A673 (cell line): ENCODE measurements at regions of chr12 and their contacts with region 1.

Region 1: GRCh38 chr12:47837190-47838171 is 17.8 kb upstream of the HDAC7 start:
- DNase-seq: peak; percentile 74
- H3K4me3 ChIP-seq: no peak overlapping the region
- H3K27ac ChIP-seq: no peak overlapping the region
- H3K4me1 ChIP-seq: no peaks in the 10 kb centered on the region
- H3K27me3 ChIP-seq: no peaks in the 10 kb centered on the region
- CTCF ChIP-seq: peak; percentile 95

Region 2: DNA sequence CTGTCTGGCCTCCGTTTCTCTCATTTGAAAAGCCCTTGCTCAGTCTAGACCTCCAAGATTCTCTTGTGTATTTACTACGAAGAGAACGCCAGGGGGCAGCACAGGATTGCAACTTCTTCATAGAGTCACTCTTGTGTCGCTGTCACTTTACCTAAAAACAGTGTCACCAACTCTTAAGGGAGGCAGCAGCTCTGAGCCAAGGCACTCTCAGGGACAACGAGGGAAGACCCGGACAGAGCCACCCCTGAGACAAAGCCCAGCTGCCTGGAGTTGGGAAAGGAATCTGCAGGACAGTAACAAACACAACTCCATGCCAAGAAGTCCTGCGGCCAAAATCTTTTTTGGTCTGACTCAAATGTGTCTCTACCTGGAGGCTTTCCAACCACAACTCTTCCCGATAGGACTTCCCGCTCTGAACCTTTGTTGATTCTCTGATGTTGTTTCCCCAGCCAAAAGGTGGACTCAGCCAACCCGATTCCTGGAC is 122.0 kb before region 1 on chr12:
- CTCF ChIA-PET with region 1: interaction called, 13 read pairs
- POLR2A ChIA-PET with region 1: no interaction called
- intact Hi-C with region 1: loop called (anchors 1 kb)
- DNase-seq: peak; percentile 89
- H3K4me3 ChIP-seq: no peak overlapping the region
- H3K27ac ChIP-seq: no peak overlapping the region
- H3K4me1 ChIP-seq: peaks cover 11% of the 10 kb centered on the region
- H3K27me3 ChIP-seq: no peaks in the 10 kb centered on the region
- CTCF ChIP-seq: peak; percentile 81

Region 3: GRCh38 chr12:47773062-47773857 is 64.2 kb before region 1 on chr12 and contains the start of gene SLC48A1:
- CTCF ChIA-PET with region 1: interaction called, 10 read pairs
- POLR2A ChIA-PET with region 1: no interaction called
- intact Hi-C with region 1: loop called (anchors 2 kb)
- DNase-seq: peak; percentile 81
- H3K4me3 ChIP-seq: peak within 1 kb of the TSS; percentile 88
- H3K27ac ChIP-seq: peak within 1 kb of the TSS; percentile 77
- H3K4me1 ChIP-seq: peaks cover 63% of the 10 kb centered on the region
- H3K27me3 ChIP-seq: no peaks in the 10 kb centered on the region
- CTCF ChIP-seq: peak; percentile 46; the same call in 1 of the 2 replicates
- total RNA-seq, gene SLC48A1: 39.3 and 39.8 TPM in 2 replicates

Region 4: DNA sequence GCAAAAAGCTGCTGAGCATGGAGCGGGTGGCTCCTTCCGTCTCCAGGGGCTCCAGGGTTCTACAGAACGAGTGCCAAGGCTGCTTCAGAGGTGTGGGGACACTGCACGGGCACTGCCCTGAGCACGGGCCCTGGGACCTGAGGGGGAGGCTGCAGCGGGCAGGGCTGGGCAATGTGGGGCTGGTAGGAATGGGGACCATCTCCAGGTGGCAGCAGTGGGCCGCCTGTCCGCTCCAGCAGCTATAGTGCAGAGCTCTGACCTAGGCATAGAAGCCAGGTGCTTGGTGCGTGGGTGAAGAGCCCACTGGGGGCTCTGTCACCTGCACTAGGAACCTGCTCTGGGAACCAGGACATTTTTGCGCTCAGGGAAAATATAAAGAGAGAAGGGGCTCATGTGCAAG is 40.0 kb before region 1 on chr12:
- CTCF ChIA-PET with region 1: interaction called, 8 read pairs
- POLR2A ChIA-PET with region 1: no interaction called
- intact Hi-C with region 1: loop called (anchors 1 kb)
- DNase-seq: no peak
- H3K4me3 ChIP-seq: no peak overlapping the region
- H3K27ac ChIP-seq: no peak overlapping the region
- H3K4me1 ChIP-seq: no peaks in the 10 kb centered on the region
- H3K27me3 ChIP-seq: no peaks in the 10 kb centered on the region
- CTCF ChIP-seq: peak; percentile 44

Region 5: GRCh38 chr12:47819896-47820630 is 17.4 kb before region 1 on chr12 and contains the start of gene HDAC7:
- CTCF ChIA-PET with region 1: interaction called, 14 read pairs
- POLR2A ChIA-PET with region 1: no interaction called
- intact Hi-C with region 1: no loop called
- DNase-seq: peak; percentile 88
- H3K4me3 ChIP-seq: peak within 1 kb of the TSS; percentile 70
- H3K27ac ChIP-seq: peak within 1 kb of the TSS; percentile 76
- H3K4me1 ChIP-seq: peaks cover 45% of the 10 kb centered on the region
- H3K27me3 ChIP-seq: no peaks in the 10 kb centered on the region
- CTCF ChIP-seq: no peak
- total RNA-seq, gene HDAC7: 58.9 and 63.0 TPM in 2 replicates

Region 6: GRCh38 chr12:47910486-47910885 is 73.0 kb after region 1 on chr12:
- CTCF ChIA-PET with region 1: interaction called, 10 read pairs
- POLR2A ChIA-PET with region 1: no interaction called
- intact Hi-C with region 1: no loop called
- DNase-seq: no peak
- H3K4me3 ChIP-seq: no peak overlapping the region
- H3K27ac ChIP-seq: no peak overlapping the region
- H3K4me1 ChIP-seq: peaks cover 2% of the 10 kb centered on the region
- H3K27me3 ChIP-seq: peaks cover 22% of the 10 kb centered on the region
- CTCF ChIP-seq: no peak